SK-N-SH (cell line): ENCODE measurements at regions of chr15 and their contacts with region 1.

Region 1: DNA sequence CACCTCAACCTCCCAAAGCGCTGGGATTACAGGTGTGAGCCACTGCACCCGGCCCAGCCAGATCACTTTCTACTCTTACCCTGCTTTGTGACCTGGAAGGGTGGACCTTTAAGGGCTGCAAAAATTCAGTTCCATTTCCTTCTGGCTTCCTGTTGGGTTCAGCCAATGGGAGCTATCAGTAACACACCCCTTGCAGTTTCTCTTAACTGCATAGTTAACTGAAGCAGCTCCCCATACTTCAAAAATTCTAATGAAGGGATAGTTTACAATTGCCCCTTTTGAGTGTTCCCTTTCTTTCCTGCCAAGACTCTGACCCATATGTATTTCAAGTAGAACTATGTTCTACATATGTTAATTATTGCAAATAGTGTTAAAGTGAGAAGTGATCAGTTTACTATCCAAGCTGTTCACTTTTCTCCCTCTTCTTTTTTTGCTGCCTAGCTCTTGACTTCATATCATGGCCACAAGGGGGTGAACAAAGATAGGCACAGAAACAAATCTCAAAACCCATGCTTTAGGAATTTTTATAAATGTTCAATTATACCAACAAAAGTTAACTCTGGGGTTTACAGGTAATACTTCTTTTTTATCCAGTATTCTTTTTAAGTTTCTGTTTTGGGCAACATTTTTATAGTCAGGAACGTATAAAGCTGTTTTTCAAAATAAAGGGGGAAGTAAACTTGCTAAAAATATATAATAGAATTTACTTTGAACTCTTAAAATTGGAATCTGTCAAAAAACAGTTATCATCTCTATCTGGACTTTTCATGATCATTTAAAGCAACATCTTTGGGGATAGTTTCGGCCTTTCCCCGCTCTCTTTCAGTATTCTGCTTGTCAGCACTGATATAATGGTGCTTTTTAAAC is 8.1 kb downstream of the PGBD4 start:
- DNase-seq: peak; percentile 39
- H3K4me3 ChIP-seq: no peak overlapping the region
- H3K27ac ChIP-seq: no peak overlapping the region
- H3K4me1 ChIP-seq: no peaks in the 10 kb centered on the region
- H3K27me3 ChIP-seq: no peaks in the 10 kb centered on the region
- CTCF ChIP-seq: peak; percentile 85
- EP300 ChIP-seq: no peak
- RAD21 ChIP-seq: peak; percentile 85

Region 2: GRCh38 chr15:33963831-33964664 is 146.0 kb before region 1 on chr15:
- CTCF ChIA-PET with region 1: no interaction called
- POLR2A ChIA-PET with region 1: no interaction called
- DNase-seq: peak; percentile 47
- H3K4me3 ChIP-seq: no peak overlapping the region; a peak in 1 of 4 replicates
- H3K27ac ChIP-seq: no peak overlapping the region
- H3K4me1 ChIP-seq: no peaks in the 10 kb centered on the region; a peak in 1 of 4 replicates
- H3K27me3 ChIP-seq: no peaks in the 10 kb centered on the region
- CTCF ChIP-seq: peak; percentile 91
- EP300 ChIP-seq: no peak
- RAD21 ChIP-seq: peak; percentile 82

Region 3: GRCh38 chr15:34122771-34123183 is 12.7 kb after region 1 on chr15:
- CTCF ChIA-PET with region 1: interaction called, 21 read pairs
- POLR2A ChIA-PET with region 1: no interaction called
- DNase-seq: no peak
- H3K4me3 ChIP-seq: no peak overlapping the region
- H3K27ac ChIP-seq: peak overlapping the region in 1 of 2 experiments; percentile 37; a peak in 1 of 4 replicates
- H3K4me1 ChIP-seq: no peaks in the 10 kb centered on the region
- H3K27me3 ChIP-seq: no peaks in the 10 kb centered on the region
- CTCF ChIP-seq: no peak
- EP300 ChIP-seq: no peak
- RAD21 ChIP-seq: no peak

Region 4: DNA sequence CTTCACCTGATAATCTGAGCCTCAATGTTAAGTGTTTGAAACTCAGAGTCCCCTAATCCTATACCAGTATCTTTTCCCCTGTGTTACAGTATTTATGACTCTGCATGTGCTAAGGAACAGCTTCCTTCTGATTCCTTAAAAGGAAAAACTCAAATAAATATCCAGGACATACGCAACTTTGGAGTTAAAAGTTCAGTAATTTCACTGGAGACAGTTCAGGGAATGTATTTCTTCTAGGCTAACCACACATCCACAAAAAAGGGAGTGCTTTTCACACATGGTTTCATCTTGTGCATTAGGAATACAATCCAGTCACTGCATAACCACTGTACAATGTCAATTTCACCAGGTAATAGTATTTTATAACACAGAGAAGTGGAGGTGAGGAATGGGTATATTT is 22.9 kb after region 1 on chr15:
- CTCF ChIA-PET with region 1: interaction called, 10 read pairs
- POLR2A ChIA-PET with region 1: no interaction called
- DNase-seq: no peak
- H3K4me3 ChIP-seq: no peak overlapping the region
- H3K27ac ChIP-seq: no peak overlapping the region
- H3K4me1 ChIP-seq: no peaks in the 10 kb centered on the region
- H3K27me3 ChIP-seq: no peaks in the 10 kb centered on the region
- CTCF ChIP-seq: no peak
- EP300 ChIP-seq: no peak
- RAD21 ChIP-seq: no peak

Region 5: DNA sequence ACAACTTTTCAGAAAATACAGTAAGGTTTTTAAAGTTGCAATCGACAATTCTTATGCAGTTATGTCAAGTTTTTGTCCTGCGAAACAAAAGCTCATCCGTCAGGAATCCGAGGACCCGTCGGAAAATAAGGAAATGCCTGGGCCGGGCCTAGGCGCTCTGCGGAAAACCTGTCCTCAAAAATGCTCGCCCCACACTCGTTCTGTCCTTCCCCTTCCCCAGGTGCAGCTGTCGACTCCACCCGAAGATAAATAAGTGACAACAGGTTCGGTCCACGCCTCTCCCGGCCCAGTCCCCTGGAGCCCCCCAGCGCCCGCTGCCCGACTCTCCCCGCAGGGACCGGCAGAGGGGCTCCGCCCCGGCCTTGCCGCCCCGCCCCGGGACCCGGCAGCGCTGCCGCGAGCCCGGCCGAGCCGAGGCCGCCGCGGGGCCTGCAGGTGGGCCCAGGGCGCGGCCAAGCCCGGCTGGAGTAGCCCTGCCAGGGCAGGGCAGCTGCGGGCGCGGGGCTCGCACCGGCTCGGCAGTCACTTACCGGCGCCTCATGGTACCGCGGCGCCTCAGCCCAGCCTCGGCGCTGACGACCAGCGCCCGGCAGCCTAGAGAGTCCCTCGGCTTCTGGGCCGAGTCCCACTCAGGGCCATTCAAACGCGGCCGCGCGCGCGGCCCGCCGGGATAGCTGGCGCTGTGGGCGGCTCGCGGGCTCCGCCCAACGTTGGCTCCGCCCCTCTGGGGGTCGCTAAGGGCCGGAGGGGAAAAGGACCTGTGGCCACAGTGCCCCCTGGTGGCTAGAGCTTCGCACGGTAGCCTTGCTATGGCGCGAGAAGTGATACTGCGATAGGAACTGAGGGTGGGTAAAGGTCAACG is 99.6 kb after region 1 on chr15 and contains the start of gene KATNBL1:
- CTCF ChIA-PET with region 1: interaction called, 66 read pairs
- POLR2A ChIA-PET with region 1: interaction called, 5 read pairs
- DNase-seq: peak; percentile 97
- H3K4me3 ChIP-seq: peak within 1 kb of the TSS; percentile 86 to 98
- H3K27ac ChIP-seq: peak within 1 kb of the TSS; percentile 84 to 86
- H3K4me1 ChIP-seq: peaks cover 0 to 6% of the 10 kb centered on the region in 2 experiments; a peak in 2 of 4 replicates
- H3K27me3 ChIP-seq: no peaks in the 10 kb centered on the region
- CTCF ChIP-seq: peak; percentile 89
- EP300 ChIP-seq: no peak
- RAD21 ChIP-seq: peak; percentile 76
- polyA plus RNA-seq, gene KATNBL1: 13.8 and 20.3 TPM in 2 replicates

Region 6: GRCh38 chr15:34215789-34216188 is 105.8 kb after region 1 on chr15:
- CTCF ChIA-PET with region 1: interaction called, 10 read pairs
- POLR2A ChIA-PET with region 1: no interaction called
- DNase-seq: no peak
- H3K4me3 ChIP-seq: no peak overlapping the region
- H3K27ac ChIP-seq: no peak overlapping the region
- H3K4me1 ChIP-seq: no peaks in the 10 kb centered on the region
- H3K27me3 ChIP-seq: no peaks in the 10 kb centered on the region
- CTCF ChIP-seq: no peak
- EP300 ChIP-seq: no peak
- RAD21 ChIP-seq: no peak